Right ventricle myocardium superior (tissue), 1 donor: ENCODE measurements at regions of chr22 and their contacts with region 1.

Region 1: GRCh38 chr22:29837780-29838598 is at the start of gene ASCC2:
- DNase-seq: peak; percentile 100
- ATAC-seq: peak; percentile 99
- total RNA-seq, gene ASCC2: 28.5 TPM

Region 2: DNA sequence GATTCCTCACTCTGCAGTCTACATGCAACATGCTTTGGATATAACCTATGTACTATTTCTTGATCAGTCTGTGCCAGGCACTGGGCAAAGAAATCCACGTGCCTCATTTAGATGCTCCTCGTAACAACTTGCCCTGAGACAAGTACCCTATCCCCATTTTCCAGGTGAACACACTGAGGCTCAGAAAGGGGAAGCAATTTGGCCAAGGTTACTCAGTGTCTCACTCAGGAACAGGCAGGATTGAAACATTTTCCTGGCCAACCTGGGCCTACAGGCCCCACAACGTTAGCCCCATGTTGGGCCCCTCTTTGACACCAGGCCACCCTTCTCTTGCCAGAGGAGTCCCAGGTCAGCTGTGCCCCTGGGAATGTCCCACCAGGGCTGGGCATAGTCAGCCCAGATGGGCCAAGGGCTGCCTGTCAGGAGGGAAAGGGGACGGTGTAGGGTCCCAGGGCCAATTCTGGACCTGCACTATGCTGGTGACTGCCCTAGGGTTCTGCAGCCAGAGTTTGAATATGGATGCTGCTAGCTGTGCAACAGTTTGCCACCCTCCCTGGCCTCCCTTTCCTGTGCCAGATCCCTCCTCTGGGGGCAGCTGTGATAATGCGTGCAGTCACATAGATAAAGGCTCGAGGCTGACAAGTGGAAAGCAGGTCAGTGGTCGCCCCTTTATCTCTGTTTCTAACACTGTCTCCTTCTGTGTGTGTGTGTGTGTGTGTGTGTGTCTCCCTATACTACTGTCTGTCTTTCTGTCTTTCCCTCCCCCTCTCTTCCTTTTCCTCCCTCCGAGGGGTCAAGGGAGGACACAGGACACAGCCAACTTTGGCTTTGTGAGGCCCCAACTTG is 642.6 kb before region 1 on chr22:
- intact Hi-C with region 1: no loop called
- DNase-seq: no peak
- ATAC-seq: peak; percentile 52

Region 3: DNA sequence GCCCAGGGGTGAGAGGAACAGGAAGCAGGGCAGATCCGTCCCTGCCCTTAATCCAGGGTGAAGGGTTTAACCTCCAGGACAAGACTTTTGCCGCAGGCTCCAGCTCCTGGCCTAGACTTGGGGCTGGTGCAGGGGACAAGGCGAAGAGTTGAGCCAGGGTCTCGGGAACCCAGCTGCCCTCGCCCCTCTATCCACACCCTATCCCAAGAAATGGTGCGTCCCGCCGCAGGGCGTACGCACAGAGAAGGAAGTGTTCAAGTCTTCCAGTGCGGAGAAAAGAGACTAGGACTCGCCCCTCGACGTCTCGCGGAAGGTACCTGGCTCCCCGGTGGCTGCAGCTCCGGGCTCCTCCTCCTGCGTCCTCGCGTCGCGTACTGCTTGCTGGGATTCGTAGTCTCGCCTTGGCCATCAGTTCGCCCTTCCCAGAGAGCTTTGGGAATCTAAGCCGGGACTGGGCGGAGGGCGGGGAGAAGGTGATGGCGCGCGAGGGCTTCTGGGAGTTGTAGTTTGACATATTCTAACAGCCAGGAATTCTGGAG is 71.3 kb before region 1 on chr22 and contains the start of gene ZMAT5:
- intact Hi-C with region 1: loop called (anchors 10 kb)
- DNase-seq: peak; percentile 96
- ATAC-seq: peak; percentile 98
- total RNA-seq, gene ZMAT5: 20.3 TPM